ENCODE measurements at regions of chr2 and their contacts with region 1.

Region 1: DNA sequence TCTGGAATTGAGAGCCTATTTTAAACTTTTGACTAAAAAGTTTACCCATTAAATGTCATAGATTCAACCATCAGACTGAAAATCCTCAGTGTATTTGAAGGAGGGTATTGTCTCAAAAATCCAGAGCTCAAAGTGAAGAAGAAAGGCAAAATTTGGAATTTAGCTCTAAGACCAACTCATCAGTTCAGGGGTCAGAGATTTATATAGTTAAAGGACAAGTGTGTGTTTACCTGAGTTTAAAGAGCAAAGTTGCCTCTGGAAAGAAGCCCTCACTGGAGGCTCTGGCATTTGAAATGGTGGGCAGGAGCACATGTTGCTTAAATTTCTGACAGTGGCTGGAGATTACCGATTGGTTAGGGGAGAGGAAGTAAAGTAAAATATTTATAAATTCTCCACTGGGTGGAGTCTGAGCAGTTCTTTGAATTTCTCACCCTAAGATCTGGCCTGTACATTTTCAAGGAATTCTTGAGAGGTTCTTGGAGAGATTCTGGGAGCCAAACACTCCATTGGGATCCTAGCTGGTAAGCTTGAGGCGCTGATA is at the start of gene KYNU:
- DNase-seq: no peak
- ATAC-seq: peak; percentile 78
- H3K4me3 Mint-ChIP-seq: peak within 1 kb of the TSS; percentile 83
- H3K27ac Mint-ChIP-seq: peak within 1 kb of the TSS; percentile 90
- H3K4me1 Mint-ChIP-seq: peaks cover 82% of the 10 kb centered on the region
- H3K27me3 Mint-ChIP-seq: no peaks in the 10 kb centered on the region
- CTCF ChIP-seq: no peak
- total RNA-seq, gene KYNU: 43.8 and 48.0 TPM in 2 replicates

Region 2: GRCh38 chr2:142716463-142717242 is 160.6 kb before region 1 on chr2:
- CTCF ChIA-PET with region 1: no interaction called
- POLR2A ChIA-PET with region 1: no interaction called
- intact Hi-C with region 1: no loop called
- DNase-seq: no peak
- ATAC-seq: no peak
- H3K4me3 Mint-ChIP-seq: no peak overlapping the region
- H3K27ac Mint-ChIP-seq: no peak overlapping the region
- H3K4me1 Mint-ChIP-seq: no peaks in the 10 kb centered on the region
- H3K27me3 Mint-ChIP-seq: peaks cover 5% of the 10 kb centered on the region
- CTCF ChIP-seq: no peak

Region 3: DNA sequence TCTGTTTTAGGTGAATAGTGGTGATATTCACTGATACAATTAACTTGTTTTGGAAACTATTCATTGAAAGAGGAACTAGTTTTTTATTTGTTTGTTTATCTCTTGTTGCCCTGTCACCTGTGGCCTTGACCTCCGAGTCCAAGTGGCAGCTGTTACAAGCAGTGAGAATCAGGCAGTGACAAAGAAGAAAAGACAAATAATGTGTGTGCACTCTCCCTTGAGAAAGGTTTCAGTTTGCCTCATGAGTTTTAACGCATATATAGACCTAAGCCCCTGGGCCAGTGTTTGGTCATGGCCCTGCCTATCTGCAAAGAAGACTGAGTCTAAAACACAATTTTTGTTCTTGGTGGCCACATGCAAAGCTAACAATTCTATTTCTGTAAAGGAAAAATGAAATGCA is 15.4 kb after region 1 on chr2:
- CTCF ChIA-PET with region 1: no interaction called
- POLR2A ChIA-PET with region 1: no interaction called
- intact Hi-C with region 1: loop called (anchors 1 kb)
- DNase-seq: no peak
- ATAC-seq: peak; percentile 77
- H3K4me3 Mint-ChIP-seq: no peak overlapping the region
- H3K27ac Mint-ChIP-seq: peak overlapping the region; percentile 57
- H3K4me1 Mint-ChIP-seq: peaks cover 55% of the 10 kb centered on the region
- H3K27me3 Mint-ChIP-seq: no peaks in the 10 kb centered on the region
- CTCF ChIP-seq: no peak

Region 4: DNA sequence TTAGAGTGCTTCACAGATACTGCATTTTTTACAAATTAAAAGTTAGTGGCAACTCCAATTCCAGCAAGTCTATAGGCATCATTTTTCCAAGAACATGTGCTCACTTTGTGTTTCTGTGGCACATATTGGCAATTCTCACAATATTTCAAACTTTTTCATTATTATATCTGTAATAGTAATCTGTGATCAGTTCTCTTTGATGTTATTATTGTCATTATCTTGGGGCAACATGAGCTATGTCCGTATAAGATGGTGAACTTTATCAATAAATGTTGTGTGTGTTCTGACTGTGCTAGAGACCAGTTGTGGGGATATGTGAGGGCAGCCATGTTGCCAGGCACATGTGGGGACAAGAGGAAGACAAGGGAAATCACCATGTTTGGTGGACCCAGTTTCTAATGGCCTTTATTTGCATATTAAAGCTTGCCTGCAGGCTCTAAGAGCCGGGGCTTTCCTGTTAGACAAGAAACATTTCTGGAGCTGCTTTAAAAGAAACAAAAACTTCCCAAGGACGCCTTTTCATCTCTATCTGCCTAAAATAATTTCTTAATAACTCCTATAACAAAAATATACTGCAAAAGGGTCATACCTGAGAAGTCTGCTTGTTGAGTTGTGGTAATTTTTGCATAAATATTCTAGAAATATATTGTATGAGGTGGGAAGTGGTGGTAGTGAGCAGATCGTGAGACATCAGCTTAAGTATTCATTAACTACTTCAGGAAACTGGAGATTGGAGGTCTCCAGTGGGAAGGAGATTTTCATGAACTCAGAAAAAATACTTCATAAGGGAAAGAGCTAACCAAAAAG is 37.4 kb after region 1 on chr2:
- CTCF ChIA-PET with region 1: interaction called, 4 read pairs
- POLR2A ChIA-PET with region 1: interaction called, 5 read pairs
- intact Hi-C with region 1: loop called (anchors 2 kb)
- DNase-seq: no peak
- ATAC-seq: peak; percentile 93
- H3K4me3 Mint-ChIP-seq: peak overlapping the region; percentile 69
- H3K27ac Mint-ChIP-seq: peak overlapping the region; percentile 86
- H3K4me1 Mint-ChIP-seq: peaks cover 51% of the 10 kb centered on the region
- H3K27me3 Mint-ChIP-seq: no peaks in the 10 kb centered on the region
- CTCF ChIP-seq: no peak

Region 5: GRCh38 chr2:142980561-142981378 is 103.5 kb after region 1 on chr2:
- CTCF ChIA-PET with region 1: interaction called, 16 read pairs
- POLR2A ChIA-PET with region 1: no interaction called
- intact Hi-C with region 1: loop called (anchors 2 kb)
- DNase-seq: no peak
- ATAC-seq: no peak
- H3K4me3 Mint-ChIP-seq: no peak overlapping the region
- H3K27ac Mint-ChIP-seq: peak overlapping the region; percentile 74
- H3K4me1 Mint-ChIP-seq: peaks cover 35% of the 10 kb centered on the region
- H3K27me3 Mint-ChIP-seq: no peaks in the 10 kb centered on the region
- CTCF ChIP-seq: no peak

Region 6: DNA sequence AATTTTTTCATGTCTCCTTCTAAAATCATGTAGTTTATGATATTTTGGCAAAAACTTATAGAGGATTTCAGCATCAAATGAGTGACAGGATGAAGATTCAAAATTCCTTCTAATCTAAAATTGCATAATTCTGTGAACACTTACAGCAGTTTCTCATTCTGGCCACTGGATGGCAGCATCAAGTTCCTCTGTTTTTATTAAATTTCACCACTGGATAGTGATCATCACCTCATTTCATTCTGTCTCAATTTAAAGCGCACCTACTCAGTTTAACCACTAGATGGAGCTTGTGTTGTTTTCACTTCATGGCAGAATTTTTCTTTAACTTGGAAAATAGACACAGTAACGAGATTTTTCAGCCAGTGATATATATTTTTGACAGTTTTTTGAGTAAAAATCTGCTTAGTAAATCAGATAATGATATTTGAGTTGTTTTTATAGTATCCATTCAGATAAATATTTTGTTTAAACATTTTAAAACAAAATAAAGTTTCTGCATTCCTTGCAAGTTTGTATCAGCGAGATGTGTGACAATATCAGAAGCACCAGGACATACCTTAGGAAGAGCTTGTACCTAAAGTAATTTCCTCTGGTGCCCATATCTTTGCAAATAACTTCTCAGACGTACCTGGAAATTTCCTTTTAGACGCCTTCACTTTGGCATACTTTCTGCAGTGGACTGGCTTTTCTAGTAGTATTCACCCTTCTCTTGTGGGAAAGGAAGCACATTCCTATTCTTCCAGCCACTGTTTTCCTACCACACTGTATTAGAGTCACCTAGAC is 157.2 kb after region 1 on chr2:
- CTCF ChIA-PET with region 1: no interaction called
- POLR2A ChIA-PET with region 1: no interaction called
- intact Hi-C with region 1: loop called (anchors 5 kb)
- DNase-seq: no peak
- ATAC-seq: peak; percentile 99
- H3K4me3 Mint-ChIP-seq: no peak overlapping the region
- H3K27ac Mint-ChIP-seq: no peak overlapping the region
- H3K4me1 Mint-ChIP-seq: peaks cover 9% of the 10 kb centered on the region
- H3K27me3 Mint-ChIP-seq: no peaks in the 10 kb centered on the region
- CTCF ChIP-seq: peak; percentile 79

Region 7: DNA sequence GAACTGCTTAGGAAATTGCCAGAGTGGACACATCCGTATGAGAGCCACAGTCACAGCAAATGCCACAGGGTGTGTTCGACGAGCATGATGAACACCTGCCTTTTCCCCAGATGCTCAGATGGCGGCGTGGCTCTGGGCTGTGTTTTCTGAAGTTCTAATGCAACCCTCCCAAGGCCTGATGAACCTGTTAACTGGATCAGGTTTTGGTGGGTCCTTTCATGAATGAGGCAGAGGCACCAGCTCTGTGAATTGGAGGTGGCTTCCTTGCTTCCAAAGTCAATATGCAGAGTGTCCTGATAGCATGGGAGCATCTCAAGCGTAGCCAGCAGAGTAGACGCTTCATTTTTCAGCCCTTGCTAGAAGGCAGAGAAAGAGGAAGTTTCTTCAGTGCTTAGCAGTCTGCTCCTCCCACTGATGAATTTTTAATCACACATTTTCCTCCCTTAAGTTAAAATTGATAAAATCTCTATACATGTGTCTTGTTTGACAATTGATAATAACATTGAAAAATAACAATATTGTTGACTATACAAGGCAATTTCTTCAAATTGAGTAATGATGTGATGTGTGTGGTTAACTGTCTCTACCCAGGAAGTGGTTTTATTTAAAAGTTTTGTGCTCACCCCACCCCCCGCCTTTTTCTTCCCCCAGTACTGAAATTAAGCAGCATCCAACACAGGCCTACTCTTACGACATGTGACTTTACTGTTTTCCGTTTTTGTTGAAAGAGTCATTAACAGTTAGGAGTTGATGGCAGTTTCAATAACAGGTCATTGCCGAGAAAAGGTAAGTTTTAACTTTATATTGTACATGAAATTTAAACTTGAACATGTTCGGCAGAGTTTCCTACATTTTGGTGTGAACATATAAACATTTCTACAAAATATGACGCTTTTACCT is 251.6 kb after region 1 on chr2 and contains the start of gene ARHGAP15:
- CTCF ChIA-PET with region 1: no interaction called
- POLR2A ChIA-PET with region 1: no interaction called
- intact Hi-C with region 1: loop called (anchors 5 kb)
- DNase-seq: peak; percentile 61
- ATAC-seq: peak; percentile 91
- H3K4me3 Mint-ChIP-seq: peak within 1 kb of the TSS; percentile 84
- H3K27ac Mint-ChIP-seq: peak within 1 kb of the TSS; percentile 100
- H3K4me1 Mint-ChIP-seq: peaks cover 49% of the 10 kb centered on the region
- H3K27me3 Mint-ChIP-seq: no peaks in the 10 kb centered on the region
- CTCF ChIP-seq: no peak
- total RNA-seq, gene ARHGAP15: 101 and 112 TPM in 2 replicates

Measured in activated B cell treated with CpG ODN at 0.5 μM for 24 hours (primary cell).